Tibial artery (tissue), 4 donors: ENCODE measurements at regions of chr16 and their contacts with region 1.

Region 1: GRCh38 chr16:30005341-30006094 is 5.3 kb downstream of the DOC2A start:
- DNase-seq: no peak
- H3K4me3 ChIP-seq: no peak overlapping the region
- H3K27ac ChIP-seq: no peak overlapping the region
- H3K4me1 ChIP-seq: peaks cover 0 to 15% (median 4%) of the 10 kb centered on the region in 4 donors
- H3K27me3 ChIP-seq: peaks cover 0 to 43% of the 10 kb centered on the region in 2 donors
- CTCF ChIP-seq: peak; percentile 68 to 76

Region 2: GRCh38 chr16:29738514-29738913 is 267.0 kb before region 1 on chr16:
- intact Hi-C with region 1: no loop called
- DNase-seq: no peak
- H3K4me3 ChIP-seq: no peak overlapping the region
- H3K27ac ChIP-seq: no peak overlapping the region
- H3K4me1 ChIP-seq: no peaks in the 10 kb centered on the region
- H3K27me3 ChIP-seq: peaks cover 0 to 44% of the 10 kb centered on the region in 2 donors
- CTCF ChIP-seq: no peak

Region 3: DNA sequence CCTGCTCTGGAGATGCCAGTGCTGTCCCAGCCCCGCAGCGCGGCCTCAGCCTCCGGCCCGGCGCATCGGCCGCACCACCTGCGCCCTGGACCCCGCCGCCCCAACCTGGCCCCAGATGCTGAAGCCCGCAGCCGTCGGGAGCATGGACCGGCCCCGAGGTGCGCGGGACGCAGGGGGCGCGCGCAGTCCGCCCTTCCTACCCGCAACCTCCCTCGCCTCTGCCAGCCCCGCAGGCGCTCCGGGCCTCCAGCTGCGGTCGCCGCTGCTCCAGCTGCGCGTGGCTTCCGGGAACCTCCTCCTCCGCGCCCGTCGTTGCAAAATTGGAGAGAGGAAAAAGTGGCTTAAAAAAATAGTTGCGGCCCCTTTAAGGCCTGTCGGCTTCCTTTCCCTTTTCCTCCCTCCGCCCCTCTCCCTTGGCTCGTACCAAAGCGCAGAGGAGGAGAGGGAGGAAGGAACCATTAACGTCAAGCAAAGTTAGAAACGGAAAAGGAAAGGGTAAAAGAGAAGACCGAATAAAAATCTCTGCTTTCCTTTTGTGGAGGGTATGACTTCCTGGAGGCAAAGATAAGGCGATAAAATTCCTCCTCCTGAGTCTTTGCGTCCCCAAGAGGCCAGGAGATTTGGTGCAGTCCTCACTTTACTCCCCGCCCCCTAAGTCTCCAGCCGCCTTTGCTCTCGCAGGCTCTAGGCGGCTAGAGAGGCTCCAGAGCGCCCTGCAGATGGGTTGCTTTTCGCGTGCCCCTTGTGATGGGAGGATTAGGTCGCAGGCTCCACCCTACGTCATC is 142.4 kb before region 1 on chr16 and contains the start of gene CDIPT:
- intact Hi-C with region 1: loop called (anchors 5 kb)
- DNase-seq: peak; percentile 93 to 97
- H3K4me3 ChIP-seq: peak within 1 kb of the TSS; percentile 59 to 68
- H3K27ac ChIP-seq: peak within 1 kb of the TSS; percentile 74 to 89
- H3K4me1 ChIP-seq: peaks cover 0 to 33% (median 25%) of the 10 kb centered on the region in 4 donors
- H3K27me3 ChIP-seq: no peaks in the 10 kb centered on the region
- CTCF ChIP-seq: peak; percentile 45 to 80

Region 4: GRCh38 chr16:29926005-29926710 is 79.4 kb before region 1 on chr16 and contains the start of gene KCTD13:
- intact Hi-C with region 1: loop called (anchors 10 kb)
- DNase-seq: peak; percentile 83 to 92
- H3K4me3 ChIP-seq: peak within 1 kb of the TSS; percentile 96 to 97
- H3K27ac ChIP-seq: peak within 1 kb of the TSS; percentile 80 to 89
- H3K4me1 ChIP-seq: peaks cover 0 to 25% (median 24%) of the 10 kb centered on the region in 4 donors
- H3K27me3 ChIP-seq: no peaks in the 10 kb centered on the region
- CTCF ChIP-seq: no peak